Ascending aorta (tissue), 2 donors: ENCODE measurements at regions of chr5 and their contacts with region 1.

Region 1: GRCh38 chr5:180784497-180785097 is 18.0 kb downstream of the MGAT1 start:
- DNase-seq: peak in 1 of 2 donors; percentile 87
- H3K4me3 ChIP-seq: peak overlapping the region in 1 of 2 donors; percentile 43
- H3K27ac ChIP-seq: peak overlapping the region; percentile 84 to 88
- H3K4me1 ChIP-seq: peaks cover 18 to 30% of the 10 kb centered on the region in 2 donors
- H3K27me3 ChIP-seq: no peaks in the 10 kb centered on the region
- CTCF ChIP-seq: peak; percentile 61 to 82 (median 71)

Region 2: DNA sequence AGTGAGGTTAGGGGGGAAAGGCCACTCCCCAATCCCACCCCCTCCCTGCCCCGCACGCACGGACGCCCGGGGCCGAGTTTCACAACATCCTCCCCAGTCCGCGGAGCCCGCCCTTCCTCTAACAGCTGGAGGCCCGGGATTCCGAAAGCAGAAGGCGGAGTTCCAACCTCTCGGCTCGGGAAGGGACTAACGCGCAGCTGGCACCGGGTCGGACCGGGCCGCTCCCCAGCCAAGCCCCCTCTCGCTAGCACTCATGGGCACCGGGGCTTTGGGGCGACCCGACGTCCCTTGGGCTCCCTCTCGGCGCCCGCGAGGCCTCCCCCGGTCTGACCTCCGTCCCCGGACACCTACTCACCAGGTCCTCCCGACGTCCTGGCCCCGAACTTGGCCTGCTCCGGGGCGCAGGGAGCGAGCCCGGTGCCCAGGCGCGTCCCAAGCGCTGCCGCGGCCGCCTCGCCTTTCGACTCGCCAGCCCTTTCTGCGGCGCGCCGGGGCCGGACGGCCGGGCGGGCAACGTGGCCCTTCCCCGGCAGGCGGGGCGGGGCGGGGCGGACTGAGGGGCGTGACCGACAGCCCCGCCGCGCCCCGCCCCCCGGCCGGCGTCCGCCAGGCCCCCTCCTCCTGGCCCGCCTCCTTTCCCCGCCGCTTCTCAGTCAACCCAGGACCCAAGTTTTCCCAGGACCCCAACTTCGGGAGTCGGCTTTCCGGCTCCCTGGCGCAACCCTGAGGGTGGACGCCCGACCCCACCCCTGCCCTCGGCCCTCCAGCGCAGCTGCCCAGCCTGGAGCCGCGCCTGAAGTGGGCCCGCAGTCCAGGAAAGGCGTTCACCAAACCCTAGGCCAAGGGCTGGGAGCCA is 18.0 kb after region 1 on chr5 and contains the start of gene MGAT1:
- intact Hi-C with region 1: loop called (anchors 1 kb)
- DNase-seq: peak; percentile 59 to 93
- H3K4me3 ChIP-seq: peak within 1 kb of the TSS; percentile 85 to 91
- H3K27ac ChIP-seq: peak within 1 kb of the TSS; percentile 93 to 99
- H3K4me1 ChIP-seq: peaks cover 32 to 72% of the 10 kb centered on the region in 2 donors
- H3K27me3 ChIP-seq: no peaks in the 10 kb centered on the region
- CTCF ChIP-seq: no peak
- total RNA-seq, gene MGAT1: 257 TPM

Region 3: DNA sequence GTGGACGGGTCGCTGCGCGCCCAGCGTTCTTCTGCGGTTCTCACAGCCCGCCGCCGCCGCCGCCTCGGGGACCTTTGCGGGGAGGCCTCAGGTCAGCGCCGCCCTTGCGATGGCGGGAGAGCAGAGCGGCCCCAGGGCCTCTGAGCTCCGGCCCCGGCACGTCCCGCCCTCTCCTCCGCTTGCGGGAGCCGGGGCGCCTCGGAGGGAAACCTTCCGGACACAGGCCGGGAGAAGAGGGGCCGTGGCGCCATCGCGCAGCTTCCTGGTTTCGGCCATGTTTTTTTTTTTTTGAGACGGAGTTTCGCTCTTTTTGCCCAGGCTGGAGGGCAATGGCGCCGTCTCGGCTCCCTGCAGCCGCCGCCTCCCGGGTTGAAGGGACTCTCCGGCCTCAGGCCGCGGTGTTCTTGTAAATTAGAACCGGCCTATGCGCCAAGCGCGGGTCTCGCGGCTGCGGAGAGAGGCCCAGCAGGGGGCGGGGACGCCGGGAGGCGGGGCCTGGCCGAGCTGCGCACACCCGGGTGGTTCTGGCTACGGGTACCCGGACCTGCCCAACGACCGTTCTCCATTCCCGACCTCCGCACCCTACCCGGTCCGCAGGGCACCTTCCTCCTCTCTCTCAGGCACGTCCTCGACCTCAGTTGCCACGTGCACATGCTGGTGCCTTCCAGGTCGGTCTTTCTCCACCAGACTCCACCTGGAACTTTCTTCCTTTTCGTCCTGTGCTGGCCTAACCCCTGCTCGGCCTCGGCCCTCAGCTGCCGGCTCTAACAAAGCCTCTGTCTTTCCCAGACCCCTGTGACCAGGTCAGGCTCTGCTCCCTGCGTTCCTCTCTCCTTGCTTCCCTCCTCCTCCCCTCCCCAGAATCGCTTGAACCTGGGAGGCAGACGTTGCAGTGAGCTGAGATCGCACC is 46.8 kb after region 1 on chr5:
- intact Hi-C with region 1: loop called (anchors 1 kb)
- DNase-seq: peak; percentile 55 to 89
- H3K4me3 ChIP-seq: peak overlapping the region; percentile 92 to 95
- H3K27ac ChIP-seq: peak overlapping the region; percentile 97
- H3K4me1 ChIP-seq: peaks cover 4 to 18% of the 10 kb centered on the region in 2 donors
- H3K27me3 ChIP-seq: no peaks in the 10 kb centered on the region
- CTCF ChIP-seq: peak in 2 of 3 experiments; percentile 7 to 9

Region 4: DNA sequence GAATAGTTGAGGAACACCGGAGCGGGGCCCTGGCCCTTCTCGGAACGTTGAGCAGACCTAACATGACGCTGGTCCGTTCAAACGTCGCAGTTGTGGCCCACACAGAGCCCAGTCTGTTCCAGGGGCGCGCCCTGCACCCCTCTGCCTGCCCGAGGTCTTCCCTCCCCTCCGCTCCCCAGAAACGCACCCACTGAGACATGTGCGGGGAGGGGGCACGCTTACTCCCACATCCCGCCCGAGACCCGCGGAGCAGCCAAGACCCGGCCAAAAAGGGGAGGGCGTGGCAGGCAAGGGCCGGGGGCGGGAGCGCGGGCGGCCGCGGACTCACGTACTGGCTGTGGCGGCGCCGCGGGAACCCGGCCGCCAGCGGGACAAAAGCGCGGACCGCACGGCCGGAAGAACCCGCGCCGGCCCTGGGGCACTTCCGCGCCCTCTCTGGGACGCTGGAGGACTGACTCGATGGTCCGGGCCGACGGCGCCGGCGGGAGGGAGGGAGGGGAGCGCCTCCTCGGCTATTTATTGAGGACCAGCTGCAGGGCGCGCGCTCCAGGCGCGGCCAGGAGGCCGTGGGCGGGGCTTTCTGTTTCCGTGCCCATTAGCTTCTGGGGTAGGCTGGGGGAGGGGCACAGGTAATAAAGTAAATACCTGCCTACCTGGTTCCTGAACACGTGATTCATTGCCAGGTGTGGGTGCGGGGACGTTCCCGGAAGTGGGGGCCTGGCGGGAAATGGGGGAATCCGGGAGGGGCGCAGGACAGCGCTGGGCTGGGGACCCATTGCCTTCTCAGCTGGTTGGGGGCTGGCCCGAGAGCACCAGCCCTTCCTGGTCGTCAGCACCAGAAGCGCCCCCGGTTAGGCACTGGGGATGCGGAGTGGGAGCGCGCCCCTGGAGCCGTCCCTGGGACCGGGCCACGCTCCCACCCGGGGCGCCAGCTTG is 76.6 kb after region 1 on chr5 and contains the start of gene ZFP62:
- intact Hi-C with region 1: loop called (anchors 5 kb)
- DNase-seq: peak; percentile 59 to 95
- H3K4me3 ChIP-seq: peak within 1 kb of the TSS; percentile 82 to 83
- H3K27ac ChIP-seq: peak within 1 kb of the TSS; percentile 69 to 80
- H3K4me1 ChIP-seq: peaks cover 0 to 3% of the 10 kb centered on the region in 2 donors
- H3K27me3 ChIP-seq: no peaks in the 10 kb centered on the region
- CTCF ChIP-seq: peak in 1 of 3 experiments; percentile 9
- total RNA-seq, gene ZFP62: 1.8 TPM

Region 5: DNA sequence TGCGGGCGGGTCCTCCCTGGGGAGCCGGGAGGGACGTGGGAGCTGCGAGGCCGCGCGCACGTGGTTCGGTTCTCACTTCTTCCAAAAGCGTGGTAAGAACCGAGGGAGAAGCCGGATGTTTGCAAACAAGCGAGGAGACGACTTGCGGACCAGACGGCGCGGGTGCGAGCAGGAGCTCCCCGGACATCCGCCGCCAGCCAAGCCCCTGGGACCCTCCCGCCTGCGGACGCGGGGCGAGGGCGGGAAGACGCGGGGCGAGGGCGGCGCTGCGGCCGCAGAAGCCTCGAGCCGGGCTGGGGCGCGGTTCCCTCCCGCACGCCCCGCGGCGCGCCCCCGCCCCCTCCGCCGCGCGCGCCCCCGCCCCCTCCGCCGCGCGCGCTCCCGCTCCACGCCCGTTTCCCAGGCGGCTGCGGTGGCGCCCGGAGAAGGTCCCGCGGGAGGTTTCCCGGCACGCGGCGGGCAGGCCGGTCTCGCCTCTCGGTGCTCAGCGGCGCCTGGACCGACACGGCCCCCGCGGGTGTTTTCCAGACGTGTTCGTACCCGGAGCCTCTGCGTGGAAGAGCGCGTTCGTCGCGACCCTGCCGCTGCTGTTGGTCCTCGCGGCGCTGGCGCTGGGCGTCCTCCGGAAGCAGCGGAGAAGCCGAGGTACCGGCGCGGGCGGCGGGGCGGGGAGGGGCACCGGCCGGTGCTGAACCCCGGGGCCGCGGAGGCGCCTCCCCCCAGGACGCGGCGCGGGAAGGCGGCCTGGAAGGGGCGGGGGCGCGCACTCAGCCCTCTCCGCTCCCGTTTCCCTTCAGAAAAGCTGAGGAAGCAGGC is 268.3 kb after region 1 on chr5:
- intact Hi-C with region 1: no loop called
- DNase-seq: no peak
- H3K4me3 ChIP-seq: peak overlapping the region; percentile 65 to 68
- H3K27ac ChIP-seq: no peak overlapping the region
- H3K4me1 ChIP-seq: peaks cover 0 to 8% of the 10 kb centered on the region in 2 donors
- H3K27me3 ChIP-seq: peaks cover 9% of the 10 kb centered on the region
- CTCF ChIP-seq: no peak

Region 6: GRCh38 chr5:181159286-181159829 is 374.8 kb after region 1 on chr5:
- intact Hi-C with region 1: loop called (anchors 1 kb)
- DNase-seq: peak in 1 of 2 donors; percentile 89
- H3K4me3 ChIP-seq: no peak overlapping the region
- H3K27ac ChIP-seq: no peak overlapping the region
- H3K4me1 ChIP-seq: peaks cover 0 to 3% of the 10 kb centered on the region in 2 donors
- H3K27me3 ChIP-seq: no peaks in the 10 kb centered on the region
- CTCF ChIP-seq: peak; percentile 70 to 83 (median 75)

Region 7: GRCh38 chr5:181173420-181174342 is 389.1 kb after region 1 on chr5:
- intact Hi-C with region 1: loop called (anchors 5 kb)
- DNase-seq: no peak
- H3K4me3 ChIP-seq: no peak overlapping the region
- H3K27ac ChIP-seq: no peak overlapping the region
- H3K4me1 ChIP-seq: no peaks in the 10 kb centered on the region
- H3K27me3 ChIP-seq: peaks cover 12% of the 10 kb centered on the region
- CTCF ChIP-seq: no peak